OCI-LY7 (cell line): ENCODE measurements at regions of chr6 and their contacts with region 1.

Region 1: GRCh38 chr6:33014841-33015634 is 5.6 kb upstream of the HLA-DOA start:
- DNase-seq: peak; percentile 87
- H3K4me3 ChIP-seq: no peak overlapping the region
- H3K27ac ChIP-seq: no peak overlapping the region
- H3K4me1 ChIP-seq: peaks cover 15% of the 10 kb centered on the region
- CTCF ChIP-seq: peak; percentile 94

Region 2: GRCh38 chr6:32920715-32921114 is 94.3 kb before region 1 on chr6:
- CTCF ChIA-PET with region 1: no interaction called
- POLR2A ChIA-PET with region 1: no interaction called
- intact Hi-C with region 1: no loop called
- DNase-seq: no peak
- H3K4me3 ChIP-seq: peak overlapping the region; percentile 2
- H3K27ac ChIP-seq: no peak overlapping the region
- H3K4me1 ChIP-seq: peaks cover 33% of the 10 kb centered on the region
- CTCF ChIP-seq: no peak

Region 3: DNA sequence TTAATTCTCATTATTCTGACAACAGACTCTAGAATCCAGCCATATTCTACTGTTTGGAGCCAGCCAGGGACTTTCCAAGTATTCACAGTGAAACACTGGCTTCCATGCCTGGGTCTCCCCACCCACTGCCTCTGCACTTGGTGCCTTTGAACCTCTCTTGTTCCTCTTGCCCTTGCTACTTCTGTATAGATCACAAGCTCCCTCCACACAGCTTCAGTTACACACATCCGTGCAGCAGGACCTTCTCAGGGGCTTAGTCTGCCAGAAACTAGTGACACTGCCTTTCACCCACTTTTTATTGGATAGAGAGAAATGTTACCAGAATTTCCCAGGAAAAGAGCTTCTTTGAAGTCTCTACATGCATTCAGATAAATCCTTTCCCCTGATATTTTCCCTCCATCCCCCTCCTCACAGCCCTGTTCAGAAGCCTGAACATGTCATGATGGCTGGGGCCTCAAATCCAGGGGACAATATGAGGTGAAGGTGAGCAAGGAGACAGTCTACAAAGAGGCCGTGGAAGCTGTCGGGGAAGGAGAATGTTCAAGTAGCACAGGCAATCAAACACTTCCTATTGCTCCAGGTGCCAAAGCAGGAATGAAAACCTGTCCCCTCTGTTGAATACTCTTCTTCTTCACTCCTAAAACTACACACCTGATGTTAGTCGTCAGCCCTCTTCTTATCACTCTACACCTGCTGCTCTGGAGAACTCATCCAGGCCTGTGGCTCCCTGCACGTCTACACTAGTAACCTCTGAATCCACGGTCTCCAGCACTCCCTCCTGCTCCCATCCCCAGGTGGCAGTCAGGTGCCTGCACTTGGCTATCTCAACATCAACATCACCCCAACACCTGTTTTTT is 14.5 kb after region 1 on chr6:
- CTCF ChIA-PET with region 1: interaction called, 8 read pairs
- POLR2A ChIA-PET with region 1: interaction called, 18 read pairs
- intact Hi-C with region 1: no loop called
- DNase-seq: peak; percentile 89
- H3K4me3 ChIP-seq: peak overlapping the region; percentile 52
- H3K27ac ChIP-seq: peak overlapping the region; percentile 84
- H3K4me1 ChIP-seq: peaks cover 49% of the 10 kb centered on the region
- CTCF ChIP-seq: no peak

Region 4: DNA sequence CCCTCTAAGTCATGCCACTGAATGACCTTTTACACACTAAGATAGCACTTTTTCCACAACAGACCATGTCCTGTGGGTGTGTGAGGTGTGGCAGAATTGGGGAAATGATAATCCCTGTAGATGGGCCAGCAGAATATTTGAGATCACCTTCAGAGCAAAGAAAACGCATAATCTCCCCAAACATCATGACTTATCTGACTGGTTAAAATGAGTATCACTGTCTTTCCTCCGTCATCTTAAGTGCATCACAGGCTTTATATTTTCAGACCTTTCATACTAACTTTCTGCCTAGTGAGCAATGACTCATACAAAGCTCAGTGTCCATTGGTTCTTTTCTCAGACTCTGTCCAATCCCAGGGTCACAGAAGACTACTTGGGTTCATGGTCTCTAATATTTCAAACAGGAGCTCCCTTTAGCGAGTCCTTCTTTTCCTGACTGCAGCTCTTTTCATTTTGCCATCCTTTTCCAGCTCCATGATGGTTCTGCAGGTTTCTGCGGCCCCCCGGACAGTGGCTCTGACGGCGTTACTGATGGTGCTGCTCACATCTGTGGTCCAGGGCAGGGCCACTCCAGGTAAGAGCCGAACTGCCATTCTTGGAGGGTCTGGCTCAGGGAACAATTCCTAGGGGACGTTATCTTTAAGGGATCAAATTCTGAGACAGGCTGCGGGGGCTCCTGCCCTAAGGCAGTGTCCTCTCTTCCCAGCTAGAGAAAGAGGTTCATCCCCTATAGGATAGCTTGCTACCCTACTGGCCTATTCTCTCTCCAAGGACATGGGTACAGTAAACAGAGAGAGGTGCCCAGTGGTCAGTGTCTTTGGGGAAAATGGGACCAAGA is 60.7 kb after region 1 on chr6 and contains the start of gene HLA-DPB1:
- CTCF ChIA-PET with region 1: no interaction called
- POLR2A ChIA-PET with region 1: interaction called, 15 read pairs
- intact Hi-C with region 1: no loop called
- DNase-seq: peak; percentile 90
- H3K4me3 ChIP-seq: peak within 1 kb of the TSS; percentile 80
- H3K27ac ChIP-seq: peak within 1 kb of the TSS; percentile 88
- H3K4me1 ChIP-seq: peaks cover 41% of the 10 kb centered on the region
- CTCF ChIP-seq: no peak
- total RNA-seq, gene HLA-DPB1: 117 and 139 TPM in 2 replicates

Region 5: DNA sequence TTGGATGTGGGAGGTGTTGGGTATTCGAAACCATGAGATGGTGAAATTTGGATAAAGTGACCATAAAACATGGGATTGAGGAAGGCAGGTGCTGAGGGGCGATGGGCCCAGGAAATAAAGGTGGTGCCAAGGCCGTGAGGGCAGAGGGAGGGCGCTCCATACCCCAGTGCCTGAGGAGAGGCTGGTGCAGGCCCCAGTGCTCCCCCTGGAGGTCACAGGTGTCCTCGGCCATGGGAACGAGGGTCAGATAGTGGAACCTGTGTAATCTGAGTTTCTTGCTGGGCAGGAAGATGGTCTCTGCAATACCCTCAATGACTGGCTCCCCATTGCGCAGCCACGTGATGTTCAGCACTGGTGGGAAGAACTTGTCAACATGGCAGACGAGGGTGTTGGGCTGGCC is 76.9 kb after region 1 on chr6:
- CTCF ChIA-PET with region 1: no interaction called
- POLR2A ChIA-PET with region 1: no interaction called
- intact Hi-C with region 1: loop called (anchors 1 kb)
- DNase-seq: peak; percentile 70
- H3K4me3 ChIP-seq: no peak overlapping the region
- H3K27ac ChIP-seq: no peak overlapping the region
- H3K4me1 ChIP-seq: no peaks in the 10 kb centered on the region
- CTCF ChIP-seq: peak; percentile 89

Region 6: GRCh38 chr6:33248925-33249731 is 234.1 kb after region 1 on chr6:
- CTCF ChIA-PET with region 1: no interaction called
- POLR2A ChIA-PET with region 1: no interaction called
- intact Hi-C with region 1: loop called (anchors 5 kb)
- DNase-seq: peak; percentile 99
- H3K4me3 ChIP-seq: peak overlapping the region; percentile 73
- H3K27ac ChIP-seq: peak overlapping the region; percentile 74
- H3K4me1 ChIP-seq: peaks cover 23% of the 10 kb centered on the region
- CTCF ChIP-seq: no peak